ENCODE measurements at regions of chr11 and their contacts with region 1.

Region 1: DNA sequence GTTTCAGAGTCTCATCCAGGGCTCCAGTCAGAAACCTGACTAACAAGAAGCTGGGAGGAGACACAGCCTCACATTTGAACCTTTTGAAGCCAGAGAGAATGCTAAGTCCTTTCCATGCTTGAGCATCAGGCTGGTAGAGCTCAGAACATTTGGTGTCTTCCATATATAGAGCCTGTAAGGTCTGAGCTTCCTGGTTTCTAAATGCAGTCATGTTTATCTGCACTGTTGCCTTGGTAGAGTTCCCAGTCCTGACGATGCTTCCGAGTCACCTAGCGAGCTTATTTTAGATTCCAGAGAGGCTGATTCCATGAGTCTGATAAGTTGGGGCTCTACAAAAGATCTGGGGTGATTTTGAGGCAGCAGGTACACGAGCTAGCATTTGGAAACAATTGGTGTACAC is 68.4 kb upstream of the SORL1 start:
- DNase-seq: no peak
- H3K4me3 ChIP-seq: no peak overlapping the region
- H3K27ac ChIP-seq: no peak overlapping the region
- H3K4me1 ChIP-seq: peaks cover 0 to 5% (median 1%) of the 10 kb centered on the region in 4 experiments; a peak in 3 of 7 replicates
- H3K27me3 ChIP-seq: no peaks in the 10 kb centered on the region
- CTCF ChIP-seq: no peak
- EP300 ChIP-seq: no peak
- POLR2A ChIP-seq: no peak
- RAD21 ChIP-seq: no peak

Region 2: DNA sequence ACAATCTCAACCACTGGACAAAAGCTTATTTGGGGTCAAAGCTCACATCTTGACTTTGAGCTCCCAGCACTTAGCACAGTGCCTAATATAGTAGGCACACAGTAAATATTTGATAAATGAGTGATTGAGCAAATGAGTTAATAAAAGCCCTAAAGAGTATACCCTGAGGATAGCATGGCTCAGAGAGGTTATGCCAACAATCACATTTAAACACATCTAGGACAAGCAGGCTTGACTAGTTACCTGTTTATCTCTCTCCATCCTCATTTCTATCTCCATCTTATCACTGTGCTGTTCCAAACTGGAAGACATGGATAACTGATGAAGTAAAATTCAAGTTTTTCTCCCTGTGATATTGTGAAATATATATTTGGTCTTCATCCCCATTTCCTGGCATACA is 28.7 kb before region 1 on chr11:
- CTCF ChIA-PET with region 1: interaction called, 10 read pairs
- POLR2A ChIA-PET with region 1: no interaction called
- DNase-seq: no peak
- H3K4me3 ChIP-seq: no peak overlapping the region
- H3K27ac ChIP-seq: no peak overlapping the region
- H3K4me1 ChIP-seq: no peaks in the 10 kb centered on the region; a peak in 1 of 7 replicates
- H3K27me3 ChIP-seq: no peaks in the 10 kb centered on the region
- CTCF ChIP-seq: no peak
- EP300 ChIP-seq: no peak
- POLR2A ChIP-seq: no peak
- RAD21 ChIP-seq: no peak

Region 3: GRCh38 chr11:121367001-121367843 is 16.5 kb before region 1 on chr11:
- CTCF ChIA-PET with region 1: interaction called, 12 read pairs
- POLR2A ChIA-PET with region 1: no interaction called
- DNase-seq: no peak
- H3K4me3 ChIP-seq: no peak overlapping the region
- H3K27ac ChIP-seq: no peak overlapping the region
- H3K4me1 ChIP-seq: peaks cover 0 to 13% (median 4%) of the 10 kb centered on the region in 4 experiments; a peak in 4 of 7 replicates
- H3K27me3 ChIP-seq: no peaks in the 10 kb centered on the region; a peak in 1 of 7 replicates
- CTCF ChIP-seq: peak in 1 of 3 experiments; percentile 1; a peak in 1 of 4 replicates
- EP300 ChIP-seq: no peak
- POLR2A ChIP-seq: no peak
- RAD21 ChIP-seq: no peak

Region 4: DNA sequence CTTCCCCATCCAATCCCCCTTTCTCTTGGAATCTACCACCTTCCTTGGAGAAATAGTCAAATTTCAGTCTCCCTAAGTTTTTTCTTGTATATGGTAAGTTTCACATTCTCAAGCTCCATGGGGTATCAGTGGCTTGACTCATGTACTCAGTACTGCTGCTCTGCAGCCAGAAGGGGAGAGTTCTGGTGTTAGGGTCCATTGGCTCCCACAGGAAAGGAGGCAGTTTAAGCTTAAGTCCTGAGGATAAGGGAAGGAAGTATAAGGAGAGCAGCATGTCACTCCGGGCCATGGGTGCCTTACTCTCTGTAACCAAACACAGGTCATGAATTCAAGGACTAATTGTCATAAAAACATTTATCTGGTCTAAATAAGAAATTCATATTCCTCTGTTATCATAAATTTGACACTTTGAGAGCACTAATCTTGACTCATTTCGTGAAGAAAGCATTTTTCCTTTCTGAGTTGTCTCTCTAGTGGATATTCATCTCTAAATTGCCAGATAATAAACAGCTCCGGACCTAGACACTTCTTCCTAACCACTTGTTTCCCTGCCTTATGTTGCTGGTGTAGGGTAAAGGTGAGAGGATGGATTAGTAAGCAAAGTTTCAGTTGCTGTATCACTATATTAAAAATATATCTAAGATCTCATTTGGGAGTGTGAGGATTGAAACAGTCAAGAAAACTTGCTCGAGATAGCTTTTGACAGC is 48.3 kb after region 1 on chr11:
- CTCF ChIA-PET with region 1: interaction called, 11 read pairs
- POLR2A ChIA-PET with region 1: no interaction called
- DNase-seq: no peak
- H3K4me3 ChIP-seq: no peak overlapping the region
- H3K27ac ChIP-seq: no peak overlapping the region
- H3K4me1 ChIP-seq: peaks cover 0 to 2% (median under 1%) of the 10 kb centered on the region in 4 experiments; a peak in 1 of 7 replicates
- H3K27me3 ChIP-seq: peaks cover 0 to 5% (median 3%) of the 10 kb centered on the region in 4 experiments; a peak in 6 of 7 replicates
- CTCF ChIP-seq: no peak
- EP300 ChIP-seq: no peak
- POLR2A ChIP-seq: no peak
- RAD21 ChIP-seq: no peak